Right ventricle myocardium superior (tissue), 1 donor: ENCODE measurements at regions of chr14 and their contacts with region 1.

Region 1: DNA sequence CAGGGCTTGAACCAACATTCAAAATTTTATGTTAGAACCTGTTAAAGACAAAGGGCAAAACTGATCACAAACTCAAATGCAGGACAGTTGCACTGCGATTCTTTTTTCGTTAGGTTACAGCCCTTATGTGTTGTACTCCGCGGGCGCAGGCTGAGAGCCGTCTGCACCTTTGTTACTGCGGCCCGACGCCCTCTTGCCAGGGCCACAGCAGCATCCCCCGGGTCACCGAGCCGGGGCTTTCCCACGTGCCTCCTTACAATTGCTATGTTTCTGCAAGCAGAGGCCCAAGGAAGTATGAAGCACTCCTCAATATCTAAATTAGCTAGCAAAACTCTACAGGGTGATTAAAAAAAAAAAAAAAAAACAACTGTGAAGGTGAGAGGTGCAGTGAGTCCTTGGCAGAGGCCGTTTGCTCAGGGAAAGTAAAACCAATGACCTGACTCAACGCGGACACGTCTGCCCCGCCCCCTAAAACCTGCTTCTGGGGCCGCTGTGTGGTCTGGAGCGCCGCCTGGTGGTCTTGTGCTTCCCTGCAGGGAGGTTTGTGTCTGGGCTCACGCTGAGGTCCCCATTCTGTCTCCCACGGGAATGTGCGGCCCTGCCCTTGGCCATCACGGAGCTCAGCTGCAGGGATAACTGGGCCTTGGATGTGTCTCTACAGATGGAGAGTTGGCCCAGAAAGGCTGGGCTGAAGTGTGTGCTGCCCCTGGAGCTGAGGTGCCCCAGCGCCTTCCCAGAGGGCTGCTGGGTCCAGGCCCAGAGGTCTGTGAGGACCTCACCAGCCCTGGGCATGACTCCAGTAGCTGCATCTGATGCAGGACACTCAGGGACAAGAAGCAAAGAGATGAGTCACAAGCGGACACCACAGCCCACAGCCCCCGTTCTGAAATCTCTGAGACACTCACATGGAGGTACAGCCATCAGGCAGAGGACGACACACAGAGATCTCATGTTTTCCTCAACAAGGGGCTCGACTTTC is 418.5 kb downstream of the TMEM121 start:
- DNase-seq: peak; percentile 75
- ATAC-seq: peak; percentile 89

Region 2: GRCh38 chr14:105666420-105666819 is 278.5 kb before region 1 on chr14:
- intact Hi-C with region 1: loop called (anchors 10 kb)
- DNase-seq: no peak
- ATAC-seq: no peak